ENCODE measurements at regions of chr17 and their contacts with region 1.

Region 1: DNA sequence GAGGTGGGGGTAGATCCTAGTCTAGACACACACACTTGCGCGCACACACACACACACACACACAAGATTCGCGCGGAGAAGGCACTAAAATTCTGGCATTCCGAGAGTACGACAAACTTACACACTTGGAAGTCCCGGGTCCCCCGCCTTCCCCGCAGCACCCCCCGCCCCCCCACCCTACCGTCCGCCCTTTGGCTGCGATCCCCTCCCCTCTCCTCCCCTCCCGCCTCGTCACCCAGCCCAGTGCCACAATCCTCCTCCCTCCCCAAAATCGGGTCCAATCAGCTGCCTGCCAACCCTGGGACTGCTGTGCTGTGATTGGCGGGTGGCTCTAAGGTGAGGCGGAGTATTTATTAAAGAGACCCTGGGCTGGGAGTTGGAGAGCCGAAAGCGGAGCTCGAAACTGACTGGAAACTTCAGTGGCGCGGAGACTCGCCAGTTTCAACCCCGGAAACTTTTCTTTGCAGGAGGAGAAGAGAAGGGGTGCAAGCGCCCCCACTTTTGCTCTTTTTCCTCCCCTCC is at the start of gene SOX9:
- DNase-seq: peak; percentile 87 to 94 (median 91)
- ATAC-seq: peak; percentile 91 to 94 (median 93)
- H3K4me3 ChIP-seq: peak within 1 kb of the TSS; percentile 54 to 94 (median 74)
- H3K27ac ChIP-seq: peak within 1 kb of the TSS; percentile 76 to 98 (median 87)
- H3K4me1 ChIP-seq: peaks cover 0 to 65% (median 15%) of the 10 kb centered on the region in 12 donors
- H3K27me3 ChIP-seq: peaks cover 3 to 89% (median 40%) of the 10 kb centered on the region in 9 donors
- CTCF ChIP-seq: no peak
- POLR2A ChIP-seq: peak; percentile 96 to 97
- total RNA-seq, gene SOX9: 8.9 to 19.7 (median 13.7) TPM

Region 2: DNA sequence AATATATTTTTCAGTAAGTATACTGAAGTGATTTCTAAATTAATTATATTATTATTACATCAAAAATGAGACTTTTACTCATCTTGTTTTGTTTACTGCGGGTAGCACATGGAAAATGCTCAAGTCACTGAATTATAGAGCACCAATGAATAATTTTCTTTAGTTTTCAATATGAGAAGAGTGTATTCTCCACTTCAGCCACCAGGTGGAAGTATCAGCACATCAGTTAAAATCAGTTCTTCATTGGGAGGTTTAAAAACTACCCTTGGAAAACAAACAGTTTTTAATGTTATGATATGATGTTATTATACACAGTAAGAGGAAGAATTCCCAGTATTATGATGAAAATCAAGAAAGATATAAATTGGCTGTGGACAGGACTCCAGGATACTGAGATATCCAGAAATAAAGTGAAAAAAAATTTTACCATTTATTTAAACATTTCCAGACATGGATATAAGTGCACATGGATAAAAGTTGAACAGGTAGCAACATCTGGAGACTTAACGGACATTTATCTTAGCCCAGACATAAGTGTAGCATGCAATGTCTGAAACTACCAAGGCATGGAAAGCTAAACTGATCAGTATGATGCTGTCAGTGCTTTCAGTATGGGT is 1484.1 kb before region 1 on chr17:
- intact Hi-C with region 1: loop called in 2 of 10 experiments (anchors 5 to 10 kb)
- DNase-seq: no peak
- ATAC-seq: no peak
- H3K4me3 ChIP-seq: no peak overlapping the region
- H3K27ac ChIP-seq: no peak overlapping the region
- H3K4me1 ChIP-seq: no peaks in the 10 kb centered on the region
- H3K27me3 ChIP-seq: no peaks in the 10 kb centered on the region
- CTCF ChIP-seq: peak; percentile 61 to 82 (median 76)
- POLR2A ChIP-seq: no peak

Region 3: GRCh38 chr17:71392715-71393567 is 727.8 kb before region 1 on chr17:
- intact Hi-C with region 1: no loop called
- DNase-seq: no peak
- ATAC-seq: no peak
- H3K4me3 ChIP-seq: no peak overlapping the region
- H3K27ac ChIP-seq: no peak overlapping the region
- H3K4me1 ChIP-seq: no peaks in the 10 kb centered on the region
- H3K27me3 ChIP-seq: no peaks in the 10 kb centered on the region
- CTCF ChIP-seq: no peak
- POLR2A ChIP-seq: no peak

Region 4: GRCh38 chr17:71472809-71473789 is 647.6 kb before region 1 on chr17:
- intact Hi-C with region 1: loop called (anchors 1 to 10 kb)
- DNase-seq: no peak
- ATAC-seq: peak in 3 of 4 donors; percentile 62 to 75 (median 64)
- H3K4me3 ChIP-seq: no peak overlapping the region
- H3K27ac ChIP-seq: no peak overlapping the region
- H3K4me1 ChIP-seq: no peaks in the 10 kb centered on the region
- H3K27me3 ChIP-seq: no peaks in the 10 kb centered on the region
- CTCF ChIP-seq: peak; percentile 32 to 66 (median 50)
- POLR2A ChIP-seq: no peak

Region 5: DNA sequence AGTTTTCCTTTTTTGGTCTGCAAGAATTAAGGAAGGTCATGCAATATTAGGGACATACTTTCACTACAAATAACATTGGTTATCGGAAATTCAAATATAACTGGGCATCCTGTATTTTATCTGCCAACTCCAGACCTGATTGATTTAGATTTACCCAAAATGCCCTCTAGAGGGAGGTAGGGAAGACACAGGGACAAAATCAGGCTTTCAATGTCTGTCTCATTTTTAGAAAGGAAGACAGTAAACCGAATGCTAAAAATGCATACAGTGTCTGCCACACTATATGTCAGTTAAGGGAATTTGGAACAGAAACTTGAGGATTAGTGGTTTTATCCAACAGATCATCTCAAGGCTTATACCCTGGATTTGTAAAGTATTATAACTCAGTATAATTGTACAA is 161.5 kb before region 1 on chr17:
- intact Hi-C with region 1: loop called in 7 of 10 experiments (anchors 5 to 10 kb)
- DNase-seq: no peak
- ATAC-seq: no peak
- H3K4me3 ChIP-seq: no peak overlapping the region
- H3K27ac ChIP-seq: no peak overlapping the region
- H3K4me1 ChIP-seq: peaks cover 0 to 4% (median 0%) of the 10 kb centered on the region in 12 donors
- H3K27me3 ChIP-seq: no peaks in the 10 kb centered on the region
- CTCF ChIP-seq: peak in 11 of 12 donors; percentile 12 to 50 (median 25)
- POLR2A ChIP-seq: no peak

Region 6: GRCh38 chr17:72171703-72172667 is 51.3 kb after region 1 on chr17:
- intact Hi-C with region 1: loop called in 1 of 10 experiments (anchors 5 kb)
- DNase-seq: no peak
- ATAC-seq: peak; percentile 29 to 65 (median 50)
- H3K4me3 ChIP-seq: peak overlapping the region in 3 of 12 donors; percentile 2 to 28 (median 24)
- H3K27ac ChIP-seq: peak overlapping the region in 8 of 12 donors; percentile 2 to 81 (median 38)
- H3K4me1 ChIP-seq: peaks cover 0 to 15% (median 0%) of the 10 kb centered on the region in 12 donors
- H3K27me3 ChIP-seq: no peaks in the 10 kb centered on the region
- CTCF ChIP-seq: peak in 2 of 12 donors; percentile 25 to 32
- POLR2A ChIP-seq: no peak

Region 7: GRCh38 chr17:72510397-72511016 is 389.8 kb after region 1 on chr17:
- intact Hi-C with region 1: loop called in 4 of 10 experiments (anchors 5 to 10 kb)
- DNase-seq: no peak
- ATAC-seq: no peak
- H3K4me3 ChIP-seq: no peak overlapping the region
- H3K27ac ChIP-seq: no peak overlapping the region
- H3K4me1 ChIP-seq: peaks cover 0 to 10% (median under 1%) of the 10 kb centered on the region in 12 donors
- H3K27me3 ChIP-seq: no peaks in the 10 kb centered on the region
- CTCF ChIP-seq: no peak
- POLR2A ChIP-seq: no peak

Region 8: DNA sequence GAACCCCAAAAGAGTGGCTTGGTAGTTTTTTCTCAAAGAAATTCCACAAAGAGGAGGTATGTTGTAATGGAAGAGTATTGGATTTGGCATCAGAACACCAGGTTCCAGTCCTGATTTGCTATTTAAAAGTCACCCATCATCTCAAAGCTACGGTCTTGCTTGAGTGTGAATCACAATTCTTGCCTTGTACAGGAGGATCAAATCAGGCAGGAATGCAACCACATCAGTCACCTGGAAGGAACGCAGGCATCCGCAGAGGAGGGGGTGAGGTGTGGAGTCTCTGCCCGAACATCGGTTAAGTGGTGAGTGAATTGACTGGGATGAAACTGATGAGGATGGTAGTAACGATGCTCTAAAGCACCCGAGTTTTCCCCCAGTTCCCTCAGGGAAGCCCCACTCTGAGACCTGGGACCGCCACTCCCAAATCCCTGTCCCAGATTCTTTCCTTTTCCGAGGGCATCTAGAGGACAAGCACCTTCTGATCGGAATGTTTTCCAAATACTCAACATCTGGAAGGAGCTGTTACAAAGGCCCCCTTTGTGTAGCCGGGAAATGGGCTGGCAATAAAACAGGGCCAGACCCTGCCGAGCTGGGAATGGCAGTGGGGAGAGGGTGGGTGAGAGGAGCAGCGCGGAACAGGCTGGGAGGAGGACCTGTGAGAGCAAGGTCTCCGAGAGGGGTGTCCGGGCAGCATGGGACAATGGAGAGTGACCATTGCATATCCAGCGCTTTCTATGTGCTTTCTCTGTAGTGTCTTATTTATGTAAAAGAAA is 502.1 kb after region 1 on chr17:
- intact Hi-C with region 1: no loop called
- DNase-seq: no peak
- ATAC-seq: no peak
- H3K4me3 ChIP-seq: no peak overlapping the region
- H3K27ac ChIP-seq: no peak overlapping the region
- H3K4me1 ChIP-seq: peaks cover 0 to 4% (median 0%) of the 10 kb centered on the region in 12 donors
- H3K27me3 ChIP-seq: peaks cover 0 to 42% (median 9%) of the 10 kb centered on the region in 9 donors
- CTCF ChIP-seq: no peak
- POLR2A ChIP-seq: no peak

Measured in heart left ventricle (tissue), 16 donors.